Naive thymus-derived CD4-positive, alpha-beta T cell (primary cell): ENCODE measurements at regions of chr17 and their contacts with region 1.

Region 1: GRCh38 chr17:50055426-50056230 is at the start of gene ITGA3:
- DNase-seq: peak; percentile 28 to 78 (median 45)
- ATAC-seq: peak; percentile 76
- H3K4me3 ChIP-seq: peak within 1 kb of the TSS; percentile 60
- H3K4me3 Mint-ChIP-seq: peak within 1 kb of the TSS; percentile 84 to 96 (median 92)
- H3K27ac ChIP-seq: peak within 1 kb of the TSS; percentile 54
- H3K27ac Mint-ChIP-seq: peak within 1 kb of the TSS; percentile 38 to 90 (median 82)
- H3K4me1 ChIP-seq: peaks cover 0 to 7% of the 10 kb centered on the region in 2 donors
- H3K4me1 Mint-ChIP-seq: peaks cover 12 to 48% (median 20%) of the 10 kb centered on the region in 7 donors
- H3K27me3 ChIP-seq: no peaks in the 10 kb centered on the region
- H3K27me3 Mint-ChIP-seq: peaks cover 0 to 7% (median 0%) of the 10 kb centered on the region in 5 donors
- total RNA-seq, gene ITGA3: 4.0 to 14.6 (median 8.6) TPM

Region 2: GRCh38 chr17:49836111-49837030 is 219.3 kb before region 1 on chr17:
- CTCF ChIA-PET with region 1: no interaction called
- POLR2A ChIA-PET with region 1: no interaction called
- intact Hi-C with region 1: no loop called
- DNase-seq: no peak
- ATAC-seq: no peak
- H3K4me3 ChIP-seq: no peak overlapping the region
- H3K4me3 Mint-ChIP-seq: no peak overlapping the region
- H3K27ac ChIP-seq: no peak overlapping the region
- H3K27ac Mint-ChIP-seq: peak overlapping the region in 4 of 9 donors; percentile 34 to 61 (median 48)
- H3K4me1 ChIP-seq: no peaks in the 10 kb centered on the region
- H3K4me1 Mint-ChIP-seq: peaks cover 0 to 16% (median 11%) of the 10 kb centered on the region in 7 donors
- H3K27me3 ChIP-seq: no peaks in the 10 kb centered on the region
- H3K27me3 Mint-ChIP-seq: no peaks in the 10 kb centered on the region

Region 3: GRCh38 chr17:50026901-50027630 is 28.6 kb before region 1 on chr17:
- CTCF ChIA-PET with region 1: interaction called, 4 read pairs
- POLR2A ChIA-PET with region 1: interaction called, 3 read pairs
- intact Hi-C with region 1: loop called (anchors 1 kb)
- DNase-seq: peak; percentile 33 to 81 (median 69)
- ATAC-seq: peak; percentile 80
- H3K4me3 ChIP-seq: no peak overlapping the region
- H3K4me3 Mint-ChIP-seq: peak overlapping the region in 7 of 10 donors; percentile 17 to 74 (median 54)
- H3K27ac ChIP-seq: no peak overlapping the region
- H3K27ac Mint-ChIP-seq: no peak overlapping the region
- H3K4me1 ChIP-seq: peaks cover 0 to 8% of the 10 kb centered on the region in 2 donors
- H3K4me1 Mint-ChIP-seq: peaks cover 5 to 13% (median 10%) of the 10 kb centered on the region in 7 donors
- H3K27me3 ChIP-seq: peaks cover 0 to 6% of the 10 kb centered on the region in 2 donors
- H3K27me3 Mint-ChIP-seq: peaks cover 20 to 33% (median 25%) of the 10 kb centered on the region in 5 donors

Region 4: GRCh38 chr17:50731575-50732460 is 676.2 kb after region 1 on chr17:
- CTCF ChIA-PET with region 1: no interaction called
- POLR2A ChIA-PET with region 1: no interaction called
- intact Hi-C with region 1: no loop called
- DNase-seq: no peak
- ATAC-seq: peak; percentile 36
- H3K4me3 ChIP-seq: no peak overlapping the region
- H3K4me3 Mint-ChIP-seq: peak overlapping the region in 6 of 10 donors; percentile 7 to 61 (median 16)
- H3K27ac ChIP-seq: no peak overlapping the region
- H3K27ac Mint-ChIP-seq: peak overlapping the region in 7 of 9 donors; percentile 20 to 68 (median 39)
- H3K4me1 ChIP-seq: peaks cover 33 to 40% of the 10 kb centered on the region in 2 donors
- H3K4me1 Mint-ChIP-seq: peaks cover 43 to 90% (median 71%) of the 10 kb centered on the region in 7 donors
- H3K27me3 ChIP-seq: no peaks in the 10 kb centered on the region
- H3K27me3 Mint-ChIP-seq: no peaks in the 10 kb centered on the region